ENCODE measurements at regions of chr6 and their contacts with region 1.

Region 1: DNA sequence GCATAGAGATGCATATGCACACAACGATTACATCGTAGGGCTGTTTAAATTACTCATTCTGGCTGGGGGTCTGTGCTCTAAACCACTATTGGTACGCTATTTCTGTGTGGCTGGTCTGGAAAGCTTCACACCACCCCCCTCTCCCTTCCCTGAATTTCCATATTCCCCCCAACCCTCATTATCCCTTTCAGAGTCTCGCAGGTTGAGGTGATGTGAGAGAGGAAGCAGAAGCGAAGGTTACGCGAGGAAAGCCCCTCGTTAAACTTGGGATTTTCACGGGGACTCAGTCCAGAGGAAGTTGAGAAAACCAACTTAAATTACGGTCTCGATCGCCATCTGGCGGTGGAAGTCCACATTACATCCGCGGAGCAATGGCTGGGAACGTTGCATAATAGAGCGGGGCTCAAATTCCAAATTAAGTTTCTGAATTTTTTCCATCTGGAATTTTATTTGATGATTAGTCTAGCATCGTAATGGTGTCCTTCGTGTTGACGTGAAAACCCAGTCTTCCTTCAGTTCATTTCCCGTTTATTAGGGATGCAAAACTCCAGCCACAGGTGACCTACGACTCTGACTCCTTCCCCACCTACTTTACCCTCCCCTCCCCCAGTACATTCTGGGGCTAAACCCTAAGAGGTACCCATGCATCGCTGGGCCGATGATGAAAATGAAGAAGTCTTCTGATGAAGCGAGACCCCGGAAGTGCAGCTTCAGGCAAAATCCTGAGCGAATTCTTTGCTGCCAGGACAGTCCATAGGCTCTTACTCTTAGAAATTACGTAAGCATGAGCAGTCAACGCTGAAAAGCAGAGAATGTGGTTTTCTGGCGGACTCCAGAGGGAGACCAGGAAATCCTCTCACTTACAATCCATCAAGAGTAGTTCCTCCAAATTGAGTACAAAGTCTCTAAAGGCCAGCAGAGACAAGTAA is 19.7 kb downstream of the HLA-DOB start:
- DNase-seq: peak; percentile 54
- H3K4me3 Mint-ChIP-seq: peak overlapping the region; percentile 22
- H3K27ac Mint-ChIP-seq: no peak overlapping the region
- H3K4me1 Mint-ChIP-seq: peaks cover 17% of the 10 kb centered on the region
- H3K27me3 Mint-ChIP-seq: peaks cover 55% of the 10 kb centered on the region

Region 2: DNA sequence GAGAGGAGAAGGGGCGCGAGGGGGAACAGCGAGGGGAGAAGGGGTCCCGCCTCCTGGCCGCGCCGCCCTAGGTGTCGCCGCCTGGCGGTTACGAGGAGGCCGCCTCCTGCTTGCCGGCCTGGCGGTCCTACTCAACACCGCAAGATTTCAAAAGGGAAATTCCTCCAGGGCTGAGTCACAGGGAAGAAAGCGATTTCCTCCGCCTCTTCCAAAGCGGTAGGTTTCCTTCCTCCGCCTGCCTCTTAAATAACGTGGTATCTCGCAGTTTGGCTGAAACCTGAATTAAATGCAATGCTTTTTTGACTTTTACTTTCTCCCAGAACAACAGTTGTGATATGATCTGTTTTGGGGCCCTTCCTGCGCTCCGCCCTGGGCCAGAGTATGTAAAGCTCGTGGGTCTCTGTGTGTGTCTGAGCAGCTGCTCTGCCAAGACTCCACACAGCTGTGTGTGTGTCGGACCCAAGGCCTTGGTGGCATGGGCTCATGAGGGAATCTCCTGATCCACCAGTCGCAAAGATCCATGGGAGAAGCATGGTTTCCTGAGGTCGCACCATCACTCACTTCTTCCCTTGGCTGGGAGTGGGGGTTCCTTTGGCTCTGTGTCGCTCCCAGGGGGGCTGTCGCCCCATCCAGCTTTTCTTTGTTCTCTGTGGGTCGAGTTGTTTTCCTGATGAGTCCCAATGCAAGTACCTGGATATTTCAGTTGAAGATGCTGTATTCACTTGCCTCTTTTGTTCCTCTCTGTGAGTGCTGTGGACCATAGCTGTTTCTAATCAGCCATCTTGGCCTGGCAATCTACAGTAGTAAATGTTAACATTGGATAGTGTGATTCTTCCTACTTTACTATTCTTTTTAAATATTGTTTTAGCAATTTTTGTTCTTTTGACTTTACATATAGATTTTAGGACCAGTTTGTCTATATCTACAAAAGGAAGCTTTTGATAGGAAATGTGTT is 541.6 kb before region 1 on chr6:
- intact Hi-C with region 1: loop called (anchors 10 kb)
- DNase-seq: peak; percentile 41
- H3K4me3 Mint-ChIP-seq: peak overlapping the region; percentile 4
- H3K27ac Mint-ChIP-seq: peak overlapping the region; percentile 30
- H3K4me1 Mint-ChIP-seq: peaks cover 19% of the 10 kb centered on the region
- H3K27me3 Mint-ChIP-seq: peaks cover 58% of the 10 kb centered on the region

Region 3: GRCh38 chr6:32685603-32686002 is 111.5 kb before region 1 on chr6:
- intact Hi-C with region 1: loop called (anchors 5 kb)
- DNase-seq: peak; percentile 45
- H3K4me3 Mint-ChIP-seq: no peak overlapping the region
- H3K27ac Mint-ChIP-seq: no peak overlapping the region
- H3K4me1 Mint-ChIP-seq: peaks cover 25% of the 10 kb centered on the region
- H3K27me3 Mint-ChIP-seq: peaks cover 38% of the 10 kb centered on the region